ENCODE measurements at regions of chr22 and their contacts with region 1.

Region 1: DNA sequence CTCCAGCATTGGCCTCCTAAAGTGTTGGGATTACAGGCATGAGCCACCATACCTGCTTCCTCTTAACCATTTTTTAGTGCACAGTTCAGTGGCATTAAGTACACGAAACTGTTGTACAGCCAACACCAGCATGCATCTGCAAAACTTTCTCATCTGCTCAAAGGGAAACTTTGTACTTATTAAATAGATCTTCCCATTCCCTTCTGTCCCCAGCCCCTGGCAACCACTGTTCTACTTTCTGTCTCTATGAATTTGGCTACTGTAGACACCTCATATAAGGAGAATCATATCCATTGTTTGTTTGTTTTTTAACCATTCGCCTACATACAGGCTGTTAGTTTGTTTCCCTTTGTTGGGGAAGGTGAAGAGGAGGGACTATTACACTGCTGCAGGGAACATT is 6.5 kb upstream of the EP300 start:
- DNase-seq: no peak
- H3K4me3 ChIP-seq: no peak overlapping the region
- H3K27ac ChIP-seq: no peak overlapping the region
- H3K4me1 ChIP-seq: peaks cover 0 to 7% (median 3%) of the 10 kb centered on the region in 4 donors
- H3K27me3 ChIP-seq: no peaks in the 10 kb centered on the region
- CTCF ChIP-seq: no peak
- EP300 ChIP-seq: no peak
- POLR2A ChIP-seq: no peak

Region 2: DNA sequence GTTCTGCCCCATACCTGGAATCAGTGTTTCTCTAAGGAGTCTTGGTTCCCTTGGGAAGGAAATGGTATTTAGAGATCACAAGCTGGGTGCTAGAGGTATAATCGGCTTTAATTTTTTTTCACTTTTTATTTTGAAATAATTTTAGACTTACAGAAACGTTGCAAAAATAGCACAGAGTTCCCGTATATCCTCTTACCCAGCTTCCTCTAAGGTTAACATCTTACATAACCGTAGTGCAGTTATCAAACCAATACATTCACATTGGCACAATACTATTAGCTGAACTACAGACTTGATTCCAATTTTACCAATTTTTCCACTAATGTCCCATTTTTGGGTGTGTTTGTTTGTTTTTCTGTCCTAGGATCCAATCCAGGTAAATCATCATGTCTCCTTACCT is 70.8 kb before region 1 on chr22:
- intact Hi-C with region 1: loop called (anchors 10 kb)
- DNase-seq: no peak
- H3K4me3 ChIP-seq: no peak overlapping the region
- H3K27ac ChIP-seq: no peak overlapping the region
- H3K4me1 ChIP-seq: peaks cover 0 to under 1% (median 0%) of the 10 kb centered on the region in 4 donors
- H3K27me3 ChIP-seq: no peaks in the 10 kb centered on the region
- CTCF ChIP-seq: no peak
- EP300 ChIP-seq: no peak
- POLR2A ChIP-seq: no peak

Region 3: GRCh38 chr22:41191467-41191866 is 105.6 kb after region 1 on chr22:
- intact Hi-C with region 1: no loop called
- DNase-seq: no peak
- H3K4me3 ChIP-seq: no peak overlapping the region
- H3K27ac ChIP-seq: no peak overlapping the region
- H3K4me1 ChIP-seq: peaks cover 0 to under 1% (median 0%) of the 10 kb centered on the region in 4 donors
- H3K27me3 ChIP-seq: no peaks in the 10 kb centered on the region
- CTCF ChIP-seq: no peak
- EP300 ChIP-seq: no peak
- POLR2A ChIP-seq: no peak